ENCODE measurements at regions of chr7 and their contacts with region 1.

Region 1: DNA sequence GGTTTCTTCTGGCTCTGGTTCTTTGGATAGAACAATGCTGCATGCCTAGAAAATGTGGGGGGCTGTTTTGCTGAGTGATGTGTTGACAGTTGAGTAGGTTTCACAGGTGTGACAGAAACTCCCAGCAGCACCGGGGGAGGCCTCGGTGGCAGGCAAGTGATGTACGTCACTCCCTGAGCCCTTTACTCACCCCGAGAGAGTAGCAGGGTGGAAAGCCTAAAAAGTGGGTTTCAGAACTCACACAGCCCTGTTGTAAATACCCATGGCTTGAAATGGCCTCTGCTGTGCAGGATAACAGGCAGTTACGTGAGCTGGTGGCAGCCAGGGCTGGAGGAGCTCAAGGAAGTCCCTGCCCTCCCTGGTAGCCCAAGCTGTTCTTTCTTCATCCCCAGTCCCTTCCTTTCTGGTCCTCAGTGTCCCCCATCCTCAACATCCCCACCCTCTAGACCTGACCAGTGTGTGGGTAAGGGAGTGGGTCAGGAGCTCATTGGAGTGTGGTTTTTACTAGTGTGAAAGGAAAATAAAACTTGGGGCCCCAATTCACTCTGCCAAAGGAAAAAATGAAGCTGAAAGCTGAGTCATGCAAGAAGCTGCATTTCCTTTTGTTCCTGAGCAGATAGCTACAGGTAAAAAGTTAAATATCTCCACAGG is 258.1 kb downstream of the STK31 start:
- DNase-seq: no peak

Region 2: DNA sequence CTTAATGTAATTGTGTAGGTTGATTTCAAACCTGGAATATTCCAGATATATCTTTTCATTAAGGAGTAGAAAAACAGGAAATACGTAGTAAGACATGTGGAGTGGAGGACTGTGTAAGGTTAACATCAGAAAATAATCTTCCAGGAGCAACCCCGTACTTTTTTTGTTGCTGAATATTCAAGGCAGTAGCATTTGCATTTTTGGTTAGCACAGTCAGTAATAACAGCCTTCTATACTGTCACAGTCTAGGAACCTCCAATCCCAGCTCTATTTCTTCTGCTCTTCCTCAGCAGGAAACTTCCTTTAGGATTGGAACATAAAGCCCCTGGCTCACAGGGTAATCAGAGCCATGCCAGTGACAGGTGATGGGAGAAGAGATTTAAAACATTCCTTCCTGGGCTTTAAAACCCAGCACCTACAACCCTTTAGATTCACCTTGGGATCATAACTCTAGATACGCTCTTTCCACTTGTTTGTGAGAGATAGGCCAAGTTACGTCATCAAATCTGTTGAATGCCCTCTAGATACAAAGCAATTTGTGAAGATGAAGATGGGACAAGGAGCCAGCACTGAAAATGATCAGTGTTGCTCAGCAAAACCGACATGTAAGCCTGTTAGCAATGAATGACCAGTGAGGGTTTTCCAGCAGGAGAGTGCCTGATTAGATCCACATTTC is 67.4 kb after region 1 on chr7:
- intact Hi-C with region 1: loop called in 1 of 2 experiments (anchors 1 kb)
- DNase-seq: no peak

Measured in posterior vena cava (tissue), 2 donors.